HCT116 (cell line): ENCODE measurements at regions of chr6 and their contacts with region 1.

Region 1: DNA sequence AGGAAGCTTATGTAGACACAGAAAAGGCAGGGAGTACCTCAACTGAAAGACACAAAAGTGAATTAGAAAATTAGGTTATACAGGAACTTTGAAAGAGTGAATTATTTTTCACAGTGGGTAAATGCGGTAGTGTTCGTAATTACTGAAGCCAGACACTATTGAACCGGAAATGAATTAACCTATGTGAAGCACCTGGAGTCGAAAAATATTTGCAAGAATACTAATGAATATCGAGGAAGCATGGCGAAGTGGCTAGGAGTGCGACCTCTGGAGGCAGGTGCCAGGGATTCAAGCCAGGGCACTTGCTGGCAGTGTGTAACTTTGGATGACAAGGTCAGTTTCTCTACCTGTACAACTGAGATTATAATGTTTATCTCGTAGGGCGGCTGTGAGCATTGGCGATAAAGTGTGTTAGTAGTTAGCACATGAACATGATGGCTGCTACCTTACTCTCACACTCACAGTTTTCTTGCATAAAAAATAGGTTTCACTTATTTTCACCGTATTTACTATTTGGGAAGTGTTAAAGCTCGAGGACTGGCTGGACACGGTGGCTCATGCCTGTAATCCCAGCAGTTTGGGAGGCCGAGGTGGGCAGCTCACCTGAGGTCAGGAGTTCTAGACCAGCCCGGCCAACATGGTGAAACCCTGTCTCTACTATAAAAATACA is 567 bp upstream of the SLC18B1 start:
- DNase-seq: peak; percentile 76
- ATAC-seq: no peak; the same call in 1 of the 2 replicates
- H3K4me3 ChIP-seq: peak overlapping the region in 1 of 2 experiments; percentile 79; a peak in 2 of 4 replicates
- H3K27ac ChIP-seq: no peak overlapping the region; the same call in none of the 2 replicates
- H3K4me1 ChIP-seq: peaks cover 2 to 6% of the 10 kb centered on the region in 2 experiments; a peak in 2 of 4 replicates
- H3K27me3 ChIP-seq: no peaks in the 10 kb centered on the region
- CTCF ChIP-seq: peak; percentile 54 to 89 (median 88); a peak in 5 of 6 replicates
- POLR2A ChIP-seq: no peak
- RAD21 ChIP-seq: peak; percentile 48

Region 2: DNA sequence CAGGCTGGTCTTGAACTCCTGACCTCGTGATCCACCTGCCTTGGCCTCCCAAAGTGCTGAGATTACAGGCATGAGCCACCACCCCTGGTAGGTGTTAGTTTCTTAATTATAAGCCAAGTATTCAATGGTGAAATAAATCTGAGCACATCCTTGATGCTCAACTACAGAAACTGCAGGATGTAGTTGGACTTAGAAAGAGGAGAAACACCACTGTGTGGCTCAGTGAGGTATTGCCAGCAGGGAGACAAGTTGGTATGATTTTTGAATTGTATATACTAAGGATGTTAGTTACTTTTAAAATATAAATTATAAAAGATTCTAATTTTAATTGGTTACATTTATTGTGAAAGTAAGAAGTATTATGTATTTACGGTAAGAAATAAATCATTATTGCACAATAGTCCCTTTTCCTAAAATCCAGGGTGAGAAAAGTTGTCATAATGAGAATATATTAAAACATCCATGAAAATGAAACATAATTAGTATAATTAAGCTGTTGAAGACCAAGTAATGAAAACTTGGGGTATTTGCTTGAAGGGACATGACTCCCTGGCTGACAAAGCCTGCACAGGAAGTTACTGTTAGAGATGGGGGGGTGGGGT is 18.1 kb before region 1 on chr6:
- CTCF ChIA-PET with region 1: interaction called, 11 read pairs
- POLR2A ChIA-PET with region 1: interaction called, 3 read pairs
- RAD21 ChIA-PET with region 1: no interaction called
- intact Hi-C with region 1: no loop called
- DNase-seq: no peak
- ATAC-seq: peak; percentile 46; the same call in 1 of the 2 replicates
- H3K4me3 ChIP-seq: no peak overlapping the region
- H3K27ac ChIP-seq: no peak overlapping the region
- H3K4me1 ChIP-seq: no peaks in the 10 kb centered on the region
- H3K27me3 ChIP-seq: no peaks in the 10 kb centered on the region
- CTCF ChIP-seq: peak in 2 of 3 experiments; percentile 19 to 21; a peak in 2 of 6 replicates
- POLR2A ChIP-seq: no peak
- RAD21 ChIP-seq: 0 out of 2 replicates have a peak, but pooled peaks have one; percentile 12

Region 3: DNA sequence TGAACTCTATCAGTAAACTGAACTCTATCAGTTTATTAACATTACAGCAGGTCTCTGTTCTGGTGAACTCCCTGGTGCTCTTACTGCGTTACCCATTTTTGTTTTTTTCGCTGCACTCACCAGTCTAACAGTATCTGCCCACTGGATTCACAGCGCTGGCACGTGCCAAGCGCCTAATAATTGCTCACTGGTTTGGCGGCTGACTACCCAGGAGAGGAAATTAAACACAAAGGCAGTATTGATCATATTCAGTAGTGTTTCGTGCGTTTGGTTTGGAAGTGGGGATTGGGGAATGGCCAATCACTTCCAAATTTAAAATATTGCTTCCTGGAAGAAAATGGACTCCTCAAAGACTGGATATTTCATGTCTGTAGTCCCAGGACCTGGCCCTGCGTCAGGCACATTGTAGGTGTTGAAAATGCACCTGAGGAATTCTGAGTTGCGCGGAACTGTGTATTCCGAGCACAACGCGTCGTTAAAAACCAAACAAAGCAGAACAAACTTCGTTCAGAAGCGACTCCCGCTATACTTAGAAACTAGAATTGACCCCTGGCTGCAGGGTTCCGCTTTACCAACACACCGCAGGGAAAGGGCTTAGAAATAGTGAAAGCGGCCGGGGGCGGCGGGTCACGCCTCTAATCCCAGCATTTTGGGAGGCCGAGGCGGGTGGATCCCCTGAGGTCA is 14.3 kb after region 1 on chr6:
- CTCF ChIA-PET with region 1: interaction called, 6 read pairs
- POLR2A ChIA-PET with region 1: interaction called, 16 read pairs
- RAD21 ChIA-PET with region 1: interaction called in 1 of 2 experiments, 4 read pairs
- intact Hi-C with region 1: loop called (anchors 2 kb)
- DNase-seq: no peak
- ATAC-seq: peak; percentile 33
- H3K4me3 ChIP-seq: peak overlapping the region; percentile 94 to 95
- H3K27ac ChIP-seq: peak overlapping the region; percentile 93
- H3K4me1 ChIP-seq: peaks cover 9 to 51% of the 10 kb centered on the region in 2 experiments
- H3K27me3 ChIP-seq: no peaks in the 10 kb centered on the region
- CTCF ChIP-seq: no peak
- POLR2A ChIP-seq: no peak
- RAD21 ChIP-seq: no peak

Region 4: GRCh38 chr6:132858750-132859149 is 59.7 kb after region 1 on chr6:
- CTCF ChIA-PET with region 1: no interaction called
- POLR2A ChIA-PET with region 1: no interaction called
- RAD21 ChIA-PET with region 1: no interaction called
- intact Hi-C with region 1: no loop called
- DNase-seq: no peak
- ATAC-seq: no peak
- H3K4me3 ChIP-seq: no peak overlapping the region
- H3K27ac ChIP-seq: no peak overlapping the region
- H3K4me1 ChIP-seq: no peaks in the 10 kb centered on the region
- H3K27me3 ChIP-seq: no peaks in the 10 kb centered on the region
- CTCF ChIP-seq: no peak
- POLR2A ChIP-seq: no peak
- RAD21 ChIP-seq: no peak